SK-N-SH (cell line): ENCODE measurements at regions of chr1 and their contacts with region 1.

Region 1: GRCh38 chr1:167270349-167271092 is 49.8 kb downstream of the POU2F1 start:
- DNase-seq: no peak
- H3K4me3 ChIP-seq: no peak overlapping the region
- H3K27ac ChIP-seq: no peak overlapping the region
- H3K4me1 ChIP-seq: peaks cover 5 to 8% of the 10 kb centered on the region in 2 experiments; a peak in 3 of 4 replicates
- H3K27me3 ChIP-seq: no peaks in the 10 kb centered on the region
- CTCF ChIP-seq: no peak
- EP300 ChIP-seq: no peak
- RAD21 ChIP-seq: no peak; the same call in 1 of the 2 replicates

Region 2: DNA sequence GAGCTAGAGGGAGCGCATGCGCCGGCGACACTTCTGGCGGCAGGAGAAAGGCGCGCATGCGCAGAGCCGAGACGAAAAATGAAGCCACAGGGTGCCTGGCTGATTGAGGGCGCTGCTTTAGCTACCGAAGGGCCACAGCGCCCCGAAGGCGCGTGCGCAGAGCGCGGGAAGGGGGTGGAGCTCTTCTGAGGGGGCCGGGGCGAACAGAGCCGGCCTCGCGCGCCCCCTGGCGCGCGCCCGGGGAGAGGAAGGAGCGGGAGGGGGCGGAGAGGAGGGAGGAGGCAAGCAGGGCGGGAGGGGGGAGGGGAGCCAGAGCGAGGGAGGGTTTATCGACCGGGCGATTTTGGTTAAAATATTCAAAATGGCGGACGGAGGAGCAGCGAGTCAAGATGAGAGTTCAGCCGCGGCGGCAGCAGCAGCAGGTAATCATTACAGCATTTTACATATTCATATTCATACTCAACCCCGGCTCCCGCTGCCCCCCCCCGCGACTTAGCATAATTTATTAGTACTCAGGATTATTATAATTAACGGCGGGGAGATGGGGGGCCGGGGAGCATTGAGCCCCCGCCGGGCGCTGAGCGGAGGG is 49.9 kb before region 1 on chr1 and contains the start of gene POU2F1:
- CTCF ChIA-PET with region 1: interaction called, 14 read pairs
- POLR2A ChIA-PET with region 1: no interaction called
- DNase-seq: peak; percentile 96
- H3K4me3 ChIP-seq: peak within 1 kb of the TSS; percentile 85 to 100
- H3K27ac ChIP-seq: peak within 1 kb of the TSS; percentile 74 to 92
- H3K4me1 ChIP-seq: peaks cover 4 to 19% of the 10 kb centered on the region in 2 experiments; a peak in 3 of 4 replicates
- H3K27me3 ChIP-seq: no peaks in the 10 kb centered on the region
- CTCF ChIP-seq: peak; percentile 68
- EP300 ChIP-seq: no peak
- RAD21 ChIP-seq: peak; percentile 60
- polyA plus RNA-seq, gene POU2F1: 1.2 and 1.5 TPM in 2 replicates

Region 3: GRCh38 chr1:167258858-167259257 is 11.7 kb before region 1 on chr1:
- CTCF ChIA-PET with region 1: interaction called, 20 read pairs
- POLR2A ChIA-PET with region 1: no interaction called
- DNase-seq: no peak
- H3K4me3 ChIP-seq: no peak overlapping the region
- H3K27ac ChIP-seq: no peak overlapping the region
- H3K4me1 ChIP-seq: peaks cover 0 to 3% of the 10 kb centered on the region in 2 experiments; a peak in 2 of 4 replicates
- H3K27me3 ChIP-seq: no peaks in the 10 kb centered on the region
- CTCF ChIP-seq: no peak
- EP300 ChIP-seq: no peak
- RAD21 ChIP-seq: no peak

Region 4: GRCh38 chr1:167387251-167387910 is 116.9 kb after region 1 on chr1:
- CTCF ChIA-PET with region 1: interaction called, 13 read pairs
- POLR2A ChIA-PET with region 1: no interaction called
- DNase-seq: no peak
- H3K4me3 ChIP-seq: no peak overlapping the region
- H3K27ac ChIP-seq: no peak overlapping the region
- H3K4me1 ChIP-seq: no peaks in the 10 kb centered on the region
- H3K27me3 ChIP-seq: no peaks in the 10 kb centered on the region
- CTCF ChIP-seq: no peak
- EP300 ChIP-seq: no peak
- RAD21 ChIP-seq: no peak

Region 5: GRCh38 chr1:167442124-167442848 is 171.8 kb after region 1 on chr1:
- CTCF ChIA-PET with region 1: interaction called, 110 read pairs
- POLR2A ChIA-PET with region 1: no interaction called
- DNase-seq: peak; percentile 91
- H3K4me3 ChIP-seq: peak overlapping the region in 1 of 2 experiments; percentile 42; a peak in 1 of 4 replicates
- H3K27ac ChIP-seq: no peak overlapping the region
- H3K4me1 ChIP-seq: peaks cover 0 to 7% of the 10 kb centered on the region in 2 experiments; a peak in 1 of 4 replicates
- H3K27me3 ChIP-seq: no peaks in the 10 kb centered on the region; the same call in 1 of the 2 replicates
- CTCF ChIP-seq: peak; percentile 89
- EP300 ChIP-seq: no peak
- RAD21 ChIP-seq: peak; percentile 94

Region 6: DNA sequence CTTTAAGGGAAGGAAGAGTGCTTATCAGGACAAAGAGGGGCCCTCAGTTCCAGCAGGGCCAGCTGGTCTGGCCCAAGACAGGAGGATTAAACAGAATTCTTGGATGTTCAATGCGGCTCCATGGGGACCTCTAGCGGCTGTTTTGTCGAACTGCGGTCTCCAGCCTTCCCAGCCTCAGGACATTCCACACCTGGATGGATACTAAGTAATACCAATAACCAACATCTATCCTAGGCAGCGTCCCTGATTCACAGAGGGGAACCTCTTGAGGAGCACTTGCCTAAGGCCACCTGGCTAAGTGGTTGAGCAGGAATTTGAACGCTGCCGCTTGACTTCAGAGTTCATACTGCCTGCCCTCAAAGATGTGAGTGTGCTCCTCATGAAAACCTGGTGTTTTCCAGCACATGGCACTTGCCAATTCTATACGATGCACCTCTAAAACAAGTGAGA is 263.4 kb after region 1 on chr1:
- CTCF ChIA-PET with region 1: interaction called, 63 read pairs
- POLR2A ChIA-PET with region 1: no interaction called
- DNase-seq: peak; percentile 81
- H3K4me3 ChIP-seq: no peak overlapping the region; a peak in 1 of 4 replicates
- H3K27ac ChIP-seq: no peak overlapping the region
- H3K4me1 ChIP-seq: peaks cover 0 to 3% of the 10 kb centered on the region in 2 experiments; a peak in 1 of 4 replicates
- H3K27me3 ChIP-seq: no peaks in the 10 kb centered on the region; the same call in 1 of the 2 replicates
- CTCF ChIP-seq: peak; percentile 91
- EP300 ChIP-seq: no peak
- RAD21 ChIP-seq: peak; percentile 91